ENCODE measurements at regions of chr19 and their contacts with region 1.

Region 1: GRCh38 chr19:6516659-6517291 is 14.1 kb upstream of the TNFSF9 start:
- DNase-seq: peak; percentile 74
- H3K4me3 ChIP-seq: peak overlapping the region; percentile 14 to 53 (median 41)
- H3K27ac ChIP-seq: peak overlapping the region; percentile 14
- H3K4me1 ChIP-seq: peaks cover 4% of the 10 kb centered on the region
- H3K27me3 ChIP-seq: no peaks in the 10 kb centered on the region
- CTCF ChIP-seq: peak; percentile 97
- POLR2A ChIP-seq: no peak

Region 2: DNA sequence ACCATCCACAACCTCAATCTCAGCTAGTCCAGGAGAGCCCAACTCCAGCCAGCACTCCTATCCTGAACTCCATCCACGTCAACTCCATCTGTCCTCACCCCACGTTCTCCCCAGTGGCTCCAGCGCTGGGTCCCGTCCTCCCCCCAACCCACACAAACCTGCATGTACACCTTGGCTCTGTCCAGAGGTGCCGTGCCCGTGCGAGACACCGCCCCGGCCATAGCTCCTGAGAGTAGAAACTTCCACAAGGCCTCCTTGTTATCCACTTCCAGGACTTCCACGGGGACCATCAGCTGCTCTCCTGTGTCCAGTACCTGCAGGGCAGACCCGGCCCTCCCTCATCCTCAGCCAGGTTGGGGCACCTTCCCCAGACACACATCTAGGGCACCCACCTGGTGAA is 84.9 kb before region 1 on chr19:
- CTCF ChIA-PET with region 1: no interaction called
- POLR2A ChIA-PET with region 1: no interaction called
- dilution Hi-C with region 1: no loop called
- intact Hi-C with region 1: no loop called
- DNase-seq: no peak
- H3K4me3 ChIP-seq: no peak overlapping the region
- H3K27ac ChIP-seq: no peak overlapping the region
- H3K4me1 ChIP-seq: no peaks in the 10 kb centered on the region
- H3K27me3 ChIP-seq: no peaks in the 10 kb centered on the region
- CTCF ChIP-seq: no peak
- POLR2A ChIP-seq: no peak

Region 3: GRCh38 chr19:6530386-6531161 is 13.8 kb after region 1 on chr19 and contains the start of gene TNFSF9:
- CTCF ChIA-PET with region 1: interaction called, 17 read pairs
- POLR2A ChIA-PET with region 1: interaction called, 10 read pairs
- dilution Hi-C with region 1: no loop called
- intact Hi-C with region 1: loop called (anchors 1 kb)
- DNase-seq: peak; percentile 86
- H3K4me3 ChIP-seq: peak within 1 kb of the TSS; percentile 42 to 80 (median 74)
- H3K27ac ChIP-seq: peak within 1 kb of the TSS; percentile 60
- H3K4me1 ChIP-seq: peaks cover 4% of the 10 kb centered on the region
- H3K27me3 ChIP-seq: peaks cover 17 to 20% of the 10 kb centered on the region in 2 experiments
- CTCF ChIP-seq: no peak
- POLR2A ChIP-seq: peak; percentile 83
- total RNA-seq, gene TNFSF9: 0.53 and 0.72 TPM in 2 replicates

Region 4: DNA sequence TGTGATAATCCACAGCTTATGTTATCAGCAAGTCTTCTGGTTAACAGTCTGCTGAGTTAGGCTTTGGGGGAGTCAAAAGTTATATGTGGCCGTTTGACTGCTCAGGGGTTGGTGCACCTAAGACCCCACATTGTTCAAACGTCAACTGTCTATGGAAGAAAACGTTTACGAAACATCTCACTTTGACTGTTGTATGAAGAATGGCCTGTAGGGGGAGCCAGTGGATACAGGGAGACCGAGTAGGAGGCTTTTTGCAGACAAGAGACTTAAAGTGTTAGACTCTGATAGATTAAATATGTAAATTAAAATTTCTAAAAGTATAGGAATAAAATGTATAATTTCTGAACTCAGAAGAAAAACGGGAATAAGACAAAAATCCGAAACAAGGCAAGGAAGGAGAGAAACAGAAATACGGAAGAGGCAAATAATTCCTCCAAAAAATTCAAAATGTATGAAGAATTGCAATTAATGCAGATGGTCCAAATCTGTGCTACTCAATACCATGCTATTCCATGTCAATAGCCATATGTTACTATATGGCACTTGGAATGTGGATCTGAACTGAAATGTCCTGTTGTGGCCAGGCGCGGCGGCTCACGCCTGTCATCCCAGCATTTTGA is 115.3 kb after region 1 on chr19:
- CTCF ChIA-PET with region 1: interaction called, 100 read pairs
- POLR2A ChIA-PET with region 1: interaction called, 5 read pairs
- dilution Hi-C with region 1: no loop called
- intact Hi-C with region 1: loop called (anchors 1 kb)
- DNase-seq: peak; percentile 85
- H3K4me3 ChIP-seq: no peak overlapping the region
- H3K27ac ChIP-seq: no peak overlapping the region
- H3K4me1 ChIP-seq: no peaks in the 10 kb centered on the region
- H3K27me3 ChIP-seq: no peaks in the 10 kb centered on the region
- CTCF ChIP-seq: peak; percentile 72 to 79
- POLR2A ChIP-seq: no peak

Region 5: DNA sequence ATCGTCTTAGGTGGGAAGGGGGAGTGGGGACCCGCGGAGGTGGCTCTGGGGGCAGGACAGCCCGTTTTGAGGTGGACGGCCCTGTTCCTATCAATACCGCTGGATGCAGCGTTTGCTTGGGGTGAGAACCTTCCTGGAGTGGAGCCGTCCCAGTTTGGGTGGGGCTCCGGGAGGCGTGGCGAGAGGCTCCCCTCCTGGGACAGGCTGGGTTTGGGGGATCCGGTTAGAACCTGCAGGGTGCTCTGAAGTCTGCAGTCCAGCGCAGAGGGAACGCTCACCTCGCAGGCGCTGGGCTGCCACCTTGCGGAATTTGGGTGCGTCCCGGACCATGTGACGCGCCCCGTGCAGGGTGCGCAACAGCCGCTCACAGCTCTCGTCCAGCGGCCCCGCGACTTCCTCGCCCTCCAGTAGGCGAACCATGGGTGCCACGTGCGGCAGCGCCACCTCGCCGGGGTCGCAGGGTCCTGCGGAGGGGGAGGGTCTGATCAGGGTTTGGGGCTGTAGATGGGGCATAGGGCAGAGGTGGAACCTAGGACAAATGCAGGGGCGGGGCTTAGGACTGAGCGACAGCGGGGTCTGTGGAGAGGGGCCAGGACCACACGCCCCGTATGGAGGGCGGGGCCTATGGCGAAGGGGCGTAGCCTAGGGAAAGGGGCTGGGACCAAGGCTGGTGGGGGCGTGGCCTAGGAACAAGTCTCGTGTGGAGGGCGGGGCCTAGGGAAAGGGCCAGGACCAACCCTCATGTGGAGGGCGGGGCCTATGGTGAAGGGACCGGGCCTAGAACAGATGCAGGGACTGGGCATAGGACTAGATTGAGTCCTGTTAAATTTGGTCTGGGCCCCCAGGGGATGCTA is 236.6 kb after region 1 on chr19:
- CTCF ChIA-PET with region 1: no interaction called
- POLR2A ChIA-PET with region 1: no interaction called
- dilution Hi-C with region 1: no loop called
- intact Hi-C with region 1: loop called (anchors 1 kb)
- DNase-seq: peak; percentile 82
- H3K4me3 ChIP-seq: peak overlapping the region; percentile 30 to 56 (median 31)
- H3K27ac ChIP-seq: no peak overlapping the region
- H3K4me1 ChIP-seq: peaks cover 8% of the 10 kb centered on the region
- H3K27me3 ChIP-seq: no peaks in the 10 kb centered on the region
- CTCF ChIP-seq: peak; percentile 21 to 42
- POLR2A ChIP-seq: no peak

Region 6: GRCh38 chr19:6767357-6768235 is 250.8 kb after region 1 on chr19 and contains the start of gene SH2D3A:
- CTCF ChIA-PET with region 1: interaction called, 3 read pairs
- POLR2A ChIA-PET with region 1: no interaction called
- dilution Hi-C with region 1: no loop called
- intact Hi-C with region 1: loop called (anchors 1 kb)
- DNase-seq: peak; percentile 37
- H3K4me3 ChIP-seq: peak within 1 kb of the TSS in 1 of 3 experiments; percentile 4
- H3K27ac ChIP-seq: no peak within 1 kb of the TSS
- H3K4me1 ChIP-seq: peaks cover 4% of the 10 kb centered on the region
- H3K27me3 ChIP-seq: peaks cover 5 to 9% of the 10 kb centered on the region in 2 experiments
- CTCF ChIP-seq: no peak
- POLR2A ChIP-seq: no peak
- total RNA-seq, gene SH2D3A: 0.53 TPM in 1 of 2 replicates, not detected in the other

Measured in endothelial cell of umbilical vein (primary cell).